ENCODE measurements at regions of chr6 and their contacts with region 1.

Region 1: DNA sequence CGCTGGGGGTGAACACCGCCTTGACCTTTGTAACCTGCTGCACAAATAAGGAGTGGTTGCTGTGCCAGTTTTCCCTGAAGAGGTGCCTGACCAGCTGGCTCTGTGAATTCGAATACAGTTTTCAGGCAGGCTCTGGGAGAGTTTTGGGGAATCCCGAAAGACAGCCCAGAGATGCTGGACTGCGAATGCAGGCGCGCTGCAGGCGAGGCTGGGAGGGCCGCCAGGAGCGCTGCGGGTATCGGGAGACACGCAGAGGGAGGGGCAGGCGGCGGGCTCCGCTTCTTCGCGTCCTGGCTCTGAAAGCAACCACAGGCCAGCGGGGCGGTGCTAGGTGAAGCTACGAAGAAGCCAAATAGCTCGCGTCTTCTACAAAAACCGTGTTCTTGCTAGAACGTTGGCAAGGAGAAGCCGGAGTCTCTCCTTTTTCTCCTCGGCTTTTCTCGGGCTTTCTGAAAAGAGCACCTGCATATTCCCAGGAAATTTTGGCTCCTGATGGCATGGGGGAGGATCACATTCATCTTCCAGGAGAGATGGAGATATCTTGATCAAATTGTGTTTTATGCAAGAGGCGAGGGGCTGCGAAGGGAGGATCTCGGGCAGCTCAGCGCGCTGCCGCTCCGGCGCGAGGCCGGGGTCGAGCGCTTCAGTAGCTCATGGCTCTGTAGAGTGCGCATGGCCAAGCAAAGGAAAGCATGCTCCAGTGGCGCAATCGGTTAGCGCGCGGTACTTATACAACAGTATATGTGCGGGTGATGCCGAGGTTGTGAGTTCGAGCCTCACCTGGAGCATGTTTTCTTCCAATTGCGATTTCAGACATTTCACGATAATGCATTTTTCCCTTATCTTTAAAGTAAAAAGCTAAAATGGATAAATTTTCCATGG is 158.1 kb upstream of the ZNF184 start:
- DNase-seq: peak; percentile 60
- CTCF ChIP-seq: no peak

Region 2: GRCh38 chr6:27260836-27261375 is 370.1 kb before region 1 on chr6:
- CTCF ChIA-PET with region 1: no interaction called
- POLR2A ChIA-PET with region 1: interaction called, 11 read pairs
- DNase-seq: no peak
- CTCF ChIP-seq: no peak

Region 3: DNA sequence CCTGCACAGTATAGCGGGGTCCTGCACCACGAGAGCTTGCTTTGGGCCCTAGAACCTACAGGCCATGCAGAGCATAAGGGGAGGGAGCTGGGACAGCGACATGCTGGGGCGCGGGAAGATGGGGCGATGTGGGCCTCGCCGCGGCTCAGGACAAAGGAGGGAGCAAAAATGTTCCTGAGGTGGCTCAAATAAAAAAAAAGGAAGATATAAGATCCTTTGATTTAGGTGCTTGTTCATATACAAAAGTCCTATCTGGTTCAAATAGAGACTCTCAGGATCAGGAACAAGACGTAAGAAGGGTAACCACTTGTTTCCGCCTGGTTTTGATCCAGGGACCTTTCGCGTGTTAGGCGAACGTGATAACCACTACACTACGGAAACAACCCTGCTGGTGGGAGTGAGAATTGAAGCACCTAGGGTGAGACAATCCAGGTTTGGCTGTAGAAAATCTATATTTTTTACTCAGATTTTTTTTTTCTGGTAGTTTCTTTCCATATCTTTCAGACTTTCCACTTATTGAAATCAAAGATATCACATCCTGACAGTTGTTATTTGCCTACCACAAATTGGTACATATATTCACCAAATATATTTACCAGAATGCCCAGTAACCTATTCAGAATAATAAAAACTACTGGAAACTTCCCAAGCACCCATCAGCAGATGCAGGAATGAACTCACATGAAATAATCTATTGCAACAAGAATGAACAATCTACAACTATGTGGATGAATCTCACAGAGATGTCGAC is 19.8 kb after region 1 on chr6:
- CTCF ChIA-PET with region 1: no interaction called
- POLR2A ChIA-PET with region 1: no interaction called
- DNase-seq: peak; percentile 74
- CTCF ChIP-seq: peak; percentile 20

Region 4: DNA sequence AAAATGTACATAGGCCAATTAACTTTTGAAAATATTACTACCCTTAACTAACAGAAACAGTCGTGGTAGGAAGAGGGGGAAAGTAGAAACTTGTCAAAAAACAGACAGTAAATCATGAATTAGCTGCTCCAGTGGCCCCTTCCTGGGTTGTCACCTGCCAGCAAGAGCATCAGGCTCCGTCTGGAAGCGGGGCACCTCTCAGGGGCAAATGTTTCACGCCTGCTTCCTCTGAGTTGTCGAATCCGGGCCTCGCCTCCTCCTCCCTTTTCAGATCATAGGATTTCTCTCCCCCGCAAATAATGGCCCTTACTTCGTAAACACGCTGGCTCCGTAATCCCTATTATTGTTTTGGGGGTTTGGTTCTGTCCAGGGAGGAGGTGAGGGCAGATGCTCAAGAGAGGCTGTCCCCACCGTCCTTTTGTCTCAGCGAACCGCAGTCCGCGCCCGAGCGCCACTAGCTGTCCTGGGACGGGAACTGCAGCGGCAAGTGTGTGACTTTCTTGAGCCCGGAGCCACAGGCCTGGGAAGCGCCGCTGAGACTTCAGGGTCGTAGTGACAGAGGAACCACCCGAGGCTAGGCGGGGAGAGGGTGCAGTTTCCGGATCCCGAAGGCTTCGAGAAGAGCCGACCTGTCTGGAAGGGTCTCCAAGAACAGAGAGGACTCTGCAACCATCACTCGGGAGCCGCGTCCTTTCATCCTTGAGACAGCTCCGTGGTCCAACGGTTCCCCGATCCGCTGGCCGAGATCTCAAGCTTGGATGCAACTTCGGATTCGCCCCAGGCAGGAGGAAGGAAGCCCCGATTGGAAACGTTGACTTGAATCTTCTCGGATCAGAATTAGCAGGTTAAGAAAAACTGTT is 56.4 kb after region 1 on chr6:
- CTCF ChIA-PET with region 1: interaction called, 12 read pairs
- POLR2A ChIA-PET with region 1: no interaction called
- DNase-seq: peak; percentile 83
- CTCF ChIP-seq: peak; percentile 94

Region 5: DNA sequence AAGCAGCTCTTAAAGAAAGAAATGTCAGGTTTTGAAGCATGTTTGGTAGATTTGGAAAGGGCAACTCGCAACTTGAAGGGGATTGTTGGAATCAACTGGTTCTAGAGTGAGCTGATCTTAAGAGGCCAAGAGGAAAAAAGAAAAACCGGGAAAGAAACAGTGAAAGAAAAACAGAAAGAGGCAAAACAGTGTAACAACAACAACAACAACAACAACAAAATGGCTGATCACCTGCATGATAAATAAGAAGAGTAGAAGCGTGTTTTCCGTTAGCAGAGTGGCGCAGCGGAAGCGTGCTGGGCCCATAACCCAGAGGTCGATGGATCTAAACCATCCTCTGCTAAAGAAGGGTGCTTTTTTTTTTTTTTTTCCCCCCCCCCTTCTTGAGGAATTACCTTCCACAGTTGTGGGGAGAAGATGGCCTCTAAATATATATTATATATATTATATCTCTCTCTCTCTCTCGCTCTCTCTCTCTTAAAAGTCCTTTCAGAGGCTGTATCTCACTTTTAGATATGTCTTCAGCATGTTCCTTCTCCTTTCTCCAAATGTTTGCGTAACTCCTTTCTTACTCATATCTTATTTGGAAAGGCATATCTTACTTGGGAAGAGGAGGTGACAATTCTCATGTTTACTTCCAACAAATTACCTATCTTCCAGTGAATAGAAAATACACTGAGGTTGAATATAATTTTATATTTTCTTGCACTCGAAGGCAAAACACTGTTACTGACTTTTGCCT is 146.8 kb after region 1 on chr6:
- CTCF ChIA-PET with region 1: no interaction called
- POLR2A ChIA-PET with region 1: no interaction called
- DNase-seq: no peak
- CTCF ChIP-seq: no peak

Region 6: GRCh38 chr6:27893059-27893835 is 262.3 kb after region 1 on chr6:
- CTCF ChIA-PET with region 1: no interaction called
- POLR2A ChIA-PET with region 1: no interaction called
- DNase-seq: peak; percentile 88
- CTCF ChIP-seq: no peak

Measured in GM10248 (cell line).